ENCODE measurements at regions of chr2 and their contacts with region 1.

Region 1: GRCh38 chr2:28621172-28622100 is 125.6 kb downstream of the PLB1 start:
- DNase-seq: peak; percentile 99
- H3K4me3 ChIP-seq: no peak overlapping the region
- H3K27ac ChIP-seq: peak overlapping the region; percentile 97
- H3K4me1 ChIP-seq: peaks cover 22% of the 10 kb centered on the region
- H3K27me3 ChIP-seq: no peaks in the 10 kb centered on the region
- CTCF ChIP-seq: peak; percentile 48 to 67
- POLR2A ChIP-seq: peak; percentile 74

Region 2: DNA sequence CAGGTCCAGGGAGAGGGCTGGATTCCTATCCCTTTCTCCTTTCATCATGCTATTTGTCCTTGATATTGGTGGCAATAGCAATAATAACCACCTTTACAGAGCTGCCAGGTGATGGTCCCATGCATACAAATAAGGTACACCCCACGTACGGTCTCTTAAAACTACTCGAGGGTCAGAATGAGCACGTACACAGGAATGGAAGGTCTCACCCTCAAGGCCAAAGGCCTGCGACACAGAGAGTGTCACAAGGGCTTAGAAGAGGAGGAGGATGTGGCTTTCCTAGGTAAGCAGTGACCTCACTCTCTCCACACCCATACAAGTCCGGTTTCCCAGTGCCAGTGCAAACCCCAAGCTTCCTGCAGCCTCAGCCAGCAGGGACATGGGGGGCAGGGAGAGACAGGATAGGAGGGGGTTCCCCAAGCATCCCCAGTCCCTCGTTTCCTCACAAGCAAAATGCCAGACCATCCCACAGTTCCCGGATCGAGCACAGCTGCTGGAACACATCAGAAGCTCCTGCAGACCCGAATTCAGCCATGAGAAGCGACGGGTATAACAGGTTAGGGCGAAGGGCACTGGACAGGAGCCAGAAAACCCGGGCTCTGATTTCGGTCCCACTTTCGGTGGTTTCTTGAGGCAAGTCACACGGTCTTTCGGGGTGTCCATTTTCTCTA is 76.4 kb before region 1 on chr2:
- CTCF ChIA-PET with region 1: no interaction called
- POLR2A ChIA-PET with region 1: no interaction called
- dilution Hi-C with region 1: no loop called
- intact Hi-C with region 1: no loop called
- DNase-seq: no peak
- H3K4me3 ChIP-seq: no peak overlapping the region
- H3K27ac ChIP-seq: no peak overlapping the region
- H3K4me1 ChIP-seq: peaks cover 13% of the 10 kb centered on the region
- H3K27me3 ChIP-seq: peaks cover 0 to 2% of the 10 kb centered on the region in 2 experiments
- CTCF ChIP-seq: no peak
- POLR2A ChIP-seq: no peak

Region 3: GRCh38 chr2:28558158-28558820 is 63.1 kb before region 1 on chr2:
- CTCF ChIA-PET with region 1: no interaction called
- POLR2A ChIA-PET with region 1: no interaction called
- dilution Hi-C with region 1: no loop called
- intact Hi-C with region 1: no loop called
- DNase-seq: no peak
- H3K4me3 ChIP-seq: no peak overlapping the region
- H3K27ac ChIP-seq: no peak overlapping the region
- H3K4me1 ChIP-seq: no peaks in the 10 kb centered on the region
- H3K27me3 ChIP-seq: no peaks in the 10 kb centered on the region
- CTCF ChIP-seq: no peak
- POLR2A ChIP-seq: no peak

Region 4: GRCh38 chr2:28610583-28611201 is 10.7 kb before region 1 on chr2:
- CTCF ChIA-PET with region 1: interaction called, 5 read pairs
- POLR2A ChIA-PET with region 1: no interaction called
- dilution Hi-C with region 1: no loop called
- intact Hi-C with region 1: loop called (anchors 1 kb)
- DNase-seq: peak; percentile 92
- H3K4me3 ChIP-seq: no peak overlapping the region
- H3K27ac ChIP-seq: peak overlapping the region; percentile 76
- H3K4me1 ChIP-seq: peaks cover 38% of the 10 kb centered on the region
- H3K27me3 ChIP-seq: no peaks in the 10 kb centered on the region
- CTCF ChIP-seq: no peak
- POLR2A ChIP-seq: no peak

Region 5: DNA sequence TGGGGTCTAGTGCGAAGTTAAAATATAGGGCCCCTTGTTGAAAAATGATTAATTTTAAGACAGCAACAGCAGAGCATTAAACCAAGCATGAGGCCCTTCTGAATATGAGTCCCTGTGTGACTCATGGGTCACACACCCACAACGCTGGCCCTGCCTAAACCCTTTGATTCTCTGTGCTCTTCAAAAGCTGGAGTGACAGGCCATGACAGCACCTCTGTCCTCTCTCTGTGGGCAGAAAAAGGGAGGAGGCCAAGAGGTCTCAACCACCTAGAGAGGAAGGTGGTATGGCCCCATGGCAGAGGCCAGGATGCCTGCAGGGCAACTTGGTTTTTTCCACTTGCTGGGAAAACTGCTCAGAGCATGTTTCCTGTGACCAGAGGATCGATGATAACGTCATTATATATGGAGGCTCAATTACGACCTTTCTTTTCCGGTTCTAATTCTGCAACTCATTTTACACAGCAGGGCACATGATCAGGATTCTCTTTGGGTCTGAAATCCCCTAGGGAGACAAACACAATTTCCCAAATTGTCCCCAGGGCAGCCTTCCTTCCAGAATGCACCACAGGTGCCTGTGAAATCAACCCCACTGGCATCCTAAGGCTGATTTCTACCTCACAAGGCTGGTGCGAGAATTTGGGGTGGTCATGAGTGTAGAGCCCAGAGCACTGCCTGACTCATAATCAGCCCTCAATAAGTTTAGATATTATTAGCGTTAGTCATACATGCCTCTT is 28.2 kb after region 1 on chr2:
- CTCF ChIA-PET with region 1: no interaction called
- POLR2A ChIA-PET with region 1: no interaction called
- dilution Hi-C with region 1: no loop called
- intact Hi-C with region 1: loop called (anchors 1 kb)
- DNase-seq: peak; percentile 40
- H3K4me3 ChIP-seq: no peak overlapping the region
- H3K27ac ChIP-seq: peak overlapping the region; percentile 73
- H3K4me1 ChIP-seq: peaks cover 14% of the 10 kb centered on the region
- H3K27me3 ChIP-seq: no peaks in the 10 kb centered on the region
- CTCF ChIP-seq: no peak
- POLR2A ChIP-seq: no peak

Region 6: GRCh38 chr2:28661589-28662001 is 40.2 kb after region 1 on chr2:
- CTCF ChIA-PET with region 1: interaction called, 10 read pairs
- POLR2A ChIA-PET with region 1: no interaction called
- dilution Hi-C with region 1: no loop called
- intact Hi-C with region 1: loop called (anchors 1 kb)
- DNase-seq: peak; percentile 90
- H3K4me3 ChIP-seq: no peak overlapping the region
- H3K27ac ChIP-seq: peak overlapping the region; percentile 69
- H3K4me1 ChIP-seq: peaks cover 42% of the 10 kb centered on the region
- H3K27me3 ChIP-seq: no peaks in the 10 kb centered on the region
- CTCF ChIP-seq: no peak
- POLR2A ChIP-seq: no peak

Region 7: GRCh38 chr2:28705751-28706440 is 84.5 kb after region 1 on chr2:
- CTCF ChIA-PET with region 1: no interaction called
- POLR2A ChIA-PET with region 1: no interaction called
- dilution Hi-C with region 1: no loop called
- intact Hi-C with region 1: no loop called
- DNase-seq: no peak
- H3K4me3 ChIP-seq: no peak overlapping the region
- H3K27ac ChIP-seq: no peak overlapping the region
- H3K4me1 ChIP-seq: no peaks in the 10 kb centered on the region
- H3K27me3 ChIP-seq: peaks cover 0 to 2% of the 10 kb centered on the region in 2 experiments
- CTCF ChIP-seq: no peak
- POLR2A ChIP-seq: no peak

Region 8: GRCh38 chr2:28716265-28716867 is 94.9 kb after region 1 on chr2:
- CTCF ChIA-PET with region 1: no interaction called
- POLR2A ChIA-PET with region 1: no interaction called
- dilution Hi-C with region 1: no loop called
- intact Hi-C with region 1: loop called (anchors 1 kb)
- DNase-seq: peak; percentile 88
- H3K4me3 ChIP-seq: no peak overlapping the region
- H3K27ac ChIP-seq: peak overlapping the region; percentile 71
- H3K4me1 ChIP-seq: peaks cover 14% of the 10 kb centered on the region
- H3K27me3 ChIP-seq: no peaks in the 10 kb centered on the region
- CTCF ChIP-seq: no peak
- POLR2A ChIP-seq: no peak